ENCODE measurements at regions of chr12 and their contacts with region 1.

Region 1: DNA sequence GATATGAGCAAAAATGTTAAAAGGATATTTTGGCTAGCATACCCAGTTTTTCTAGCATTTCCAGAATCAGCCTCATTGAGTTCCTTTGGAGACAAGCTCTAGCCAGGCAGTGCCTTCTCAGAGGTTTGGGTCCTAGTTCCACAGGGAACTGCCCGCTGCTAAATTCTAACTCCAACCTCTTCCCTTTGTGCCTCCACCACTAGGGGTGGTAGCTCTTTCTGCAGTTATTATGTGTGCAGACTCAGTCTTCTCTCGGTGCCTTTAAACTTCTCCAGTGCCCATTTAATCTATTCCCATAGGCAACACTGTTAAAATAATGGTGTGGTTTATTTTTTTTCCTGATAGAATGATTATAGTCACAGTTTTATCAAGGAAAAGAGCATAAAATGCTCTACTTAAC is 21.5 kb upstream of the SLC25A3 start:
- DNase-seq: no peak
- H3K4me3 Mint-ChIP-seq: no peak overlapping the region
- H3K27ac Mint-ChIP-seq: no peak overlapping the region
- H3K4me1 Mint-ChIP-seq: no peaks in the 10 kb centered on the region
- H3K27me3 Mint-ChIP-seq: no peaks in the 10 kb centered on the region

Region 2: DNA sequence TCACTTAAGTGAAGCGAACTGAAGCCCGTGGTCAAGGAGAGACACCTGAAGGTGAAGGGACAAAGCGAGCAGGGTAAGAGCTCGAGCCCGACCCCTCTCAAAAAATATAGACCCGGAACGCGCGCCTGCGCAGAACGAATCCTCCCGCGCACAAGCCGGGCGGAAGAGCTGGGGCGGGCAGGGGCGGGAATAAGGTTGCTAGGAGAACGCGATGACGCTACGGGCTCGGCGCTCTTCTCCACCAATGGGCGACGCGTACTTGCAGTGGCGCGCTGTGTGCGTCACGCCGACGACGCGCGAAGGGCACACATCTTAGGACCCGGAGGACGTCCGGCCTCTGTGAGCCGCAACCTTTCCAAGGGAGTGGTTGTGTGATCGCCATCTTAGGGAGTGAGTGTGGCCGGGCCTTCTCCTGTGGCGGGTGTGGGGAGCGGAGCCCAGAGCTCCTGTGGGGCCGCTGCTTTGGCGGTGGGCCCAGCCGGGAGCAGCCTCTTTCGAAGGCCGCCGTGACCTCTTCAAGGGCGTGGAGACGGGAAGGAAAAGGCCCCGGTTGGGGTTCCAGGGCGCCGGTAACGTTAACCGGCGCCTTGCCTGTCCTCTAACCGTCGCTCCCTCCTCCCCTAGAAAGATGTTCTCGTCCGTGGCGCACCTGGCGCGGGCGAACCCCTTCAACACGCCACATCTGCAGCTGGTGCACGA is 21.5 kb after region 1 on chr12 and contains the start of gene SLC25A3:
- CTCF ChIA-PET with region 1: interaction called, 10 read pairs
- DNase-seq: peak; percentile 95
- H3K4me3 Mint-ChIP-seq: peak within 1 kb of the TSS; percentile 85
- H3K27ac Mint-ChIP-seq: peak within 1 kb of the TSS; percentile 98
- H3K4me1 Mint-ChIP-seq: peaks cover 37% of the 10 kb centered on the region
- H3K27me3 Mint-ChIP-seq: peaks cover 6% of the 10 kb centered on the region

Region 3: DNA sequence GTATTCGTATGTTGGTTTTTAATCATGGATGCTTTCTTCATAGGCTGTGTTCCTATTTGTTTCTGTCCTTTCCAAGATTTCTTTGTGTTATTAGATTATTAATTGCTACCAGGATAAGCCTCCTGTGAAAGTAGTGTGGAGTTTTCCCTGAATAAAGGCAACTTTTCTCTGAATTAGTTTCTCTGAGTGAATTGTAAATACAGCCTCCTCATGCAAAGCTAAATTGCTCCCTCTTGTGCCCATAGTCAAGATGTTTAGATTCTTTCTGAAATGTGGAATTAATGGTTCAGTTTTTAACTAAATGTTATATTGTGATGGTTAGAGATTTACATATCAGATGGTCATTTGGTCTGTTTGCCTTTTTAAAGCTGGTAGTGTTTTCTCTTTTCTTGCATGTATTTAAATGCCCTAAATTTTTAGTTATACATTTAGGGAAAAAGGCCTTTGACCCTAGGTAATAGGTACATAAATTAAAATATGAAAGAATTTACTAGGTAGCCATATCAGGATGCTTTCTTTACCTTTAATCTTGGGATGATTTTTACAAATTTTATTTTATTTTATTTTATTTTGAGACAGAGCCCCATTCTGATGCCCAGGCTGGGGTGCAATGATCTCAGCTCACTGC is 82.0 kb after region 1 on chr12:
- CTCF ChIA-PET with region 1: interaction called, 13 read pairs
- DNase-seq: no peak
- H3K4me3 Mint-ChIP-seq: no peak overlapping the region
- H3K27ac Mint-ChIP-seq: no peak overlapping the region
- H3K4me1 Mint-ChIP-seq: peaks cover 17% of the 10 kb centered on the region
- H3K27me3 Mint-ChIP-seq: no peaks in the 10 kb centered on the region

Region 4: DNA sequence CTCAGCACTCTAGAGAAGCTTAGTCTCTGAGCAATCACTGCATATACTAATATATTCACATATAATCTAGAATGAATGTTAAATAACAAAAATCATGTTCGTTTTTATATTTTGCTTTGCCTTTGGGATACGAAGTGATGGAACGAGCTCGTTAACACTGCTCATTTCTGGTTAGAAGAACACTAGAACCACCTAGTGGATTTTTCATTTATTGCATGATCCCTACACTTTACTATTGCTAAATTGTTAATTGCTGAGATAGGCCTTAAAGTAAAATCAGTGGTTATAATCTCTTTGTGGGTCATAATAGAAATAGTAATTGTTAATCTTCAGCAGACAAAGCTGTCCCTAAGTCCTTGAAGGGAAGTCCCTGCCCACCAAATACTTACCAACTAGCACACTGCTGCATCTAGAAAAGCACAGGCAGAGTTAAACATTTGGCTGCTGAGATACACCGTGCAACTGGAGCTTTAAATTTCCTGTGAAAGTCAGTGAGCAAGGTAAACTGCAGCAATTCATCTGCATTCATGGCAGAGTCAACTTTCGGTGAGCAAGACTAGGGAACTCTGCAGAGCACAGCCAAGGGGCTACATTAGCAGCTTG is 426.8 kb after region 1 on chr12:
- CTCF ChIA-PET with region 1: interaction called, 25 read pairs
- DNase-seq: no peak
- H3K4me3 Mint-ChIP-seq: no peak overlapping the region
- H3K27ac Mint-ChIP-seq: no peak overlapping the region
- H3K4me1 Mint-ChIP-seq: no peaks in the 10 kb centered on the region
- H3K27me3 Mint-ChIP-seq: no peaks in the 10 kb centered on the region

Measured in activated naive CD4-positive, alpha-beta T cell treated with anti-CD3 and anti-CD28 coated beads, Interleukin-2, amount 10 ng/mL, durations not matched to agents 7 days and 5 days (primary cell).